ENCODE measurements at regions of chr14 and their contacts with region 1.

Region 1: GRCh38 chr14:76710056-76711010 is 50.9 kb upstream of the VASH1 start:
- DNase-seq: peak; percentile 69
- ATAC-seq: peak; percentile 69
- H3K4me3 ChIP-seq: no peak overlapping the region
- H3K27ac ChIP-seq: no peak overlapping the region
- H3K4me1 ChIP-seq: no peaks in the 10 kb centered on the region
- H3K27me3 ChIP-seq: peaks cover 36% of the 10 kb centered on the region
- CTCF ChIP-seq: peak; percentile 90

Region 2: GRCh38 chr14:76664790-76665189 is 45.5 kb before region 1 on chr14:
- CTCF ChIA-PET with region 1: no interaction called
- POLR2A ChIA-PET with region 1: no interaction called
- intact Hi-C with region 1: no loop called
- DNase-seq: no peak
- ATAC-seq: no peak
- H3K4me3 ChIP-seq: no peak overlapping the region
- H3K27ac ChIP-seq: no peak overlapping the region
- H3K4me1 ChIP-seq: no peaks in the 10 kb centered on the region
- H3K27me3 ChIP-seq: peaks cover 54% of the 10 kb centered on the region
- CTCF ChIP-seq: no peak

Region 3: GRCh38 chr14:76761136-76761959 is 51.0 kb after region 1 on chr14 and contains the start of gene VASH1:
- CTCF ChIA-PET with region 1: no interaction called
- POLR2A ChIA-PET with region 1: no interaction called
- intact Hi-C with region 1: no loop called
- DNase-seq: peak; percentile 70
- ATAC-seq: peak; percentile 96
- H3K4me3 ChIP-seq: peak within 1 kb of the TSS; percentile 77
- H3K27ac ChIP-seq: no peak within 1 kb of the TSS
- H3K4me1 ChIP-seq: peaks cover 10% of the 10 kb centered on the region; the same call in 1 of the 2 replicates
- H3K27me3 ChIP-seq: peaks cover 10% of the 10 kb centered on the region; the same call in 1 of the 2 replicates
- CTCF ChIP-seq: no peak
- total RNA-seq, gene VASH1: 1.3 and 1.8 TPM in 2 replicates

Region 4: GRCh38 chr14:76784266-76785264 is 74.2 kb after region 1 on chr14:
- CTCF ChIA-PET with region 1: interaction called, 11 read pairs
- POLR2A ChIA-PET with region 1: no interaction called
- intact Hi-C with region 1: loop called (anchors 1 kb)
- DNase-seq: peak; percentile 77
- ATAC-seq: peak; percentile 98
- H3K4me3 ChIP-seq: no peak overlapping the region
- H3K27ac ChIP-seq: no peak overlapping the region
- H3K4me1 ChIP-seq: no peaks in the 10 kb centered on the region
- H3K27me3 ChIP-seq: no peaks in the 10 kb centered on the region
- CTCF ChIP-seq: peak; percentile 94

Region 5: GRCh38 chr14:76793956-76794355 is 83.6 kb after region 1 on chr14:
- CTCF ChIA-PET with region 1: interaction called, 10 read pairs
- POLR2A ChIA-PET with region 1: no interaction called
- intact Hi-C with region 1: no loop called
- DNase-seq: no peak
- ATAC-seq: no peak
- H3K4me3 ChIP-seq: no peak overlapping the region
- H3K27ac ChIP-seq: no peak overlapping the region
- H3K4me1 ChIP-seq: no peaks in the 10 kb centered on the region
- H3K27me3 ChIP-seq: no peaks in the 10 kb centered on the region
- CTCF ChIP-seq: no peak

Region 6: GRCh38 chr14:76812211-76813044 is 102.1 kb after region 1 on chr14 and contains the start of gene ANGEL1:
- CTCF ChIA-PET with region 1: no interaction called
- POLR2A ChIA-PET with region 1: no interaction called
- intact Hi-C with region 1: loop called (anchors 1 kb)
- DNase-seq: peak; percentile 94
- ATAC-seq: peak; percentile 86
- H3K4me3 ChIP-seq: peak within 1 kb of the TSS; percentile 93
- H3K27ac ChIP-seq: 0 out of 2 replicates have a peak within 1 kb of the TSS, but pooled peaks have one; percentile 6
- H3K4me1 ChIP-seq: peaks cover 5% of the 10 kb centered on the region
- H3K27me3 ChIP-seq: peaks cover 12% of the 10 kb centered on the region
- CTCF ChIP-seq: no peak
- total RNA-seq, gene ANGEL1: 9.2 and 12.4 TPM in 2 replicates

Measured in PC-3 (cell line).